HCT116 (cell line): ENCODE measurements at regions of chr10 and their contacts with region 1.

Region 1: DNA sequence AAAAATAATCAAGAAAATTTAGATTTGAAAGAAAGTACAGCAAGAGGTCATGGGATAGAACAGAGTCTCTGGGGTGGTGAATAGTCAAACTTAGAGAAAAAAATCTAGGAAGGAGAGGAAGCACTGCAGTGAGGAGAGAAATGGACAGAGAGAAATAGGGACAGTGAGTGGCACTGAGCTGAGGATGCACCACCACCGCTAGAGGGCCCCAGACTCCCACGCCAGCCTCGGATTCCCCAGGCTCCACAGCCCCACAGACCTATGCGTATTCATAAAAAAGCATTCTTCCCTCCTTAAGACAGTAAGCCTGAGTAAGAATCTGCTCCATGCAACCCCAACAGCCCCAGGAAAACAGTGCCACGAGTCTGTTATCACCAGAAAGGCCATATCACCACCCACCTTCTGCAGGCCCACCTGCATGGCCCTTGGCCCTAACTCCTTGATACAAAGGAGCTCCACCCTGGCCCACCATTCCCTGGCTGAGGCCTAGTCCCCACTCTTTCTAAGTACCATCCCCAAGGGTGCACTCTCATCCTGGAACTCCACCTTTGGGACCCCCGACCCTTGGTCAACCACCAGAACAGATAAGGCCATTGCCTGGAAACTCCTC is 91.0 kb downstream of the ALOX5 start:
- DNase-seq: peak; percentile 19
- ATAC-seq: peak; percentile 99
- H3K4me3 ChIP-seq: no peak overlapping the region
- H3K27ac ChIP-seq: no peak overlapping the region
- H3K4me1 ChIP-seq: no peaks in the 10 kb centered on the region
- H3K27me3 ChIP-seq: no peaks in the 10 kb centered on the region
- CTCF ChIP-seq: peak; percentile 72 to 93 (median 91)
- POLR2A ChIP-seq: no peak
- RAD21 ChIP-seq: peak; percentile 88

Region 2: DNA sequence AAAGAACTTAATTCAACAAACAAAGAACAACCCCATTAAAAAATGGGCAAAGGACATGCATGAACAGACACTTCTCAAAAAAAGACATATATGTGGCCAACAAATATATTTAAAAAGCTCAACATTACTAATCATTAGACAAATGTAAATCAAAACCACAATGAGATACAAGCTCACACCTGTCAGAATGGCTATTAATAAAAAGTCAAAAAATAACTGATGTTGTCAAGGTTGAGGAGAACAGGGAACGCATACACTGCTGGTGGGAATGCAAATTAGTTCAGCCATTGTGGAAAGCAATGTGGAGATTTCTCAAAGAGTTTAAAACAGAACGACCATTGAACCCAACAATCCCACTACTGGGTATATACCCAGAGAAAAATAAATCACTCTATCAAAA is 188.4 kb after region 1 on chr10:
- CTCF ChIA-PET with region 1: no interaction called
- POLR2A ChIA-PET with region 1: no interaction called
- RAD21 ChIA-PET with region 1: no interaction called
- intact Hi-C with region 1: no loop called
- DNase-seq: no peak
- ATAC-seq: no peak
- H3K4me3 ChIP-seq: no peak overlapping the region
- H3K27ac ChIP-seq: no peak overlapping the region
- H3K4me1 ChIP-seq: no peaks in the 10 kb centered on the region
- H3K27me3 ChIP-seq: no peaks in the 10 kb centered on the region
- CTCF ChIP-seq: no peak
- POLR2A ChIP-seq: no peak
- RAD21 ChIP-seq: no peak

Region 3: GRCh38 chr10:45672181-45673073 is 207.4 kb after region 1 on chr10 and contains the start of gene ZFAND4:
- CTCF ChIA-PET with region 1: interaction called, 6 read pairs
- POLR2A ChIA-PET with region 1: no interaction called
- RAD21 ChIA-PET with region 1: interaction called, 3 to 4 read pairs
- intact Hi-C with region 1: loop called (anchors 5 kb)
- DNase-seq: peak; percentile 91
- ATAC-seq: peak; percentile 97
- H3K4me3 ChIP-seq: peak within 1 kb of the TSS; percentile 87 to 94
- H3K27ac ChIP-seq: peak within 1 kb of the TSS; percentile 90
- H3K4me1 ChIP-seq: peaks cover 5 to 16% of the 10 kb centered on the region in 2 experiments; a peak in 3 of 4 replicates
- H3K27me3 ChIP-seq: no peaks in the 10 kb centered on the region
- CTCF ChIP-seq: peak in 2 of 3 experiments; percentile 33 to 41; a peak in 4 of 6 replicates
- POLR2A ChIP-seq: peak; percentile 62
- RAD21 ChIP-seq: peak; percentile 46
- total RNA-seq, gene ZFAND4: 15.5 TPM

Region 4: GRCh38 chr10:46022978-46023702 is 558.1 kb after region 1 on chr10:
- CTCF ChIA-PET with region 1: no interaction called
- POLR2A ChIA-PET with region 1: no interaction called
- RAD21 ChIA-PET with region 1: no interaction called
- intact Hi-C with region 1: loop called (anchors 2 kb)
- DNase-seq: peak; percentile 74
- ATAC-seq: peak; percentile 97
- H3K4me3 ChIP-seq: peak overlapping the region; percentile 58 to 63
- H3K27ac ChIP-seq: peak overlapping the region; percentile 77
- H3K4me1 ChIP-seq: peaks cover 21 to 37% of the 10 kb centered on the region in 2 experiments
- H3K27me3 ChIP-seq: no peaks in the 10 kb centered on the region
- CTCF ChIP-seq: peak in 2 of 3 experiments; percentile 39 to 41; a peak in 4 of 6 replicates
- POLR2A ChIP-seq: no peak
- RAD21 ChIP-seq: peak; percentile 52